Sciatic nerve (tissue), 2 donors: ENCODE measurements at regions of chr22 and their contacts with region 1.

Region 1: DNA sequence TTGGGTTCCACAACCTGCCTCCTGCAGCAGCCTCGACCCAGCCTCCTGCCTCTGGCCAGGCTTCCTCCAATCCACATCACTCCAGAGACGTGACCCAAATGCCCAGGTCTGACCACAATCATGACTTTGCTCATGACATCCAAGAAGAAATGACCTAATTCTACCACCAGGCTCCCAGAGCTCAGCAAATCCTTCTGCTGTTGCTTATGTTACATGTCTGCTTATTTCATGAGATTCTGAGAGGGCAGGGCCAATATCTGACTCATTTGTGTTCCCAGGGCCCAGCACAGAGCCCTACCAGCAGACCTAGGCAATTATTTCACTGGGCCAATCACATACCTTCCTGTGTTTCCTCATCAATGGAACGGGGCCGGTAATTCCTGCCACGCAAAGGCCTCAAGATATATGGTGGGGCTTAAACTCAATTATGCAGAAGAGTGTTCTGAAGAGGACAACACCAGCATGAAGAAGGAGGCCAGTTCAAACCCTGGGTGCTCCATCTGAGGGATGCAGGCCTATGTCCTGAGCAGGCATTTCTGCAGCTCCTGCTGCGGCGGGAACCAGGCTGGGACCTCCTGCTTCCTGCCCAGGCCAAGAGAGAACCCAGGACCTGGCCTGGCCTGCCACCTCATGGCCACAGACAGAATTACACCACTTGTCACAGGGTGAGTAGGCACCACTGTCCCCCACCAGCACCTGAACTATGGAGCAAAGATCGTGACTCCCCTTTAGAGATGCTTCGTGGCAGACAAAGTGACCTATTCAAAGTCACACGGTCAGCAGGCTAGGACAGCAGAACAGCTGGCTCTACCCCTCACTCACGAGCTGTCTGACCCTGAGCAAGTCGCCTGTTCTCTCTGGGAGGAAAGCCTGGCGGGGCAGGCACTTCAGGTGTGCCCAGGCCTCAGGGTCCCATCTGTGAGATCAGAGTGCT is 5.9 kb downstream of the CENPM start:
- DNase-seq: peak; percentile 92
- ATAC-seq: peak; percentile 93

Region 2: GRCh38 chr22:41697126-41697775 is 243.8 kb before region 1 on chr22:
- intact Hi-C with region 1: loop called (anchors 5 kb)
- DNase-seq: peak; percentile 97
- ATAC-seq: peak; percentile 88

Region 3: GRCh38 chr22:41746567-41747400 is 194.3 kb before region 1 on chr22:
- intact Hi-C with region 1: loop called (anchors 5 kb)
- DNase-seq: peak; percentile 74
- ATAC-seq: peak; percentile 91

Region 4: GRCh38 chr22:41818596-41818995 is 122.5 kb before region 1 on chr22:
- intact Hi-C with region 1: loop called (anchors 2 kb)
- DNase-seq: no peak
- ATAC-seq: no peak